Common myeloid progenitor, CD34-positive (primary cell): ENCODE measurements at regions of chr2 and their contacts with region 1.

Region 1: DNA sequence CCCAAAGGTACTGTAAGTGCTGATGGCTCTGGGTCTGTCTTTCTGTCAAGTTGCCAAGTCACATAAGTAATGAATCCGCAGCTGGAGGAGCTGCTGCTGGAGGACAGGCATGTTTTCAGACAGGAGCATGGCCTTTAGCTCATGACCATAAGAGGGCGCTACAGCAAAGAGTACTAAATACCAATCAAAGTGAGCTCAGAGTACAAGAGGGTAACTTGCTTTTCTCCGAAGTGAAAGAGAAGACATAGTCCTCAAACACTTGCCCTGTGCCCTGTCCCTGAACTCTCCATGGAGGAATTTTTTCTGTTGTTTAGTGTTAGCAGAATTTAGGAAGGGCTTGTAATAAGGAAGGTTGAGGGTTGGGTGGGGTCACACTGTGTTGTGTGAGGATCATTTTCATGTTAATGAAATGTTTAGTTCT is 58.0 kb upstream of the EML6 start:
- DNase-seq: peak; percentile 71 to 84 (median 73)
- H3K4me3 ChIP-seq: no peak overlapping the region
- H3K27ac ChIP-seq: no peak overlapping the region
- H3K4me1 ChIP-seq: peaks cover 0 to 15% (median 9%) of the 10 kb centered on the region in 4 experiments
- H3K27me3 ChIP-seq: no peaks in the 10 kb centered on the region

Region 2: GRCh38 chr2:54634564-54635511 is 30.6 kb before region 1 on chr2:
- CTCF ChIA-PET with region 1: interaction called, 15 read pairs
- POLR2A ChIA-PET with region 1: no interaction called
- DNase-seq: no peak
- H3K4me3 ChIP-seq: no peak overlapping the region
- H3K27ac ChIP-seq: no peak overlapping the region
- H3K4me1 ChIP-seq: no peaks in the 10 kb centered on the region
- H3K27me3 ChIP-seq: no peaks in the 10 kb centered on the region

Region 3: GRCh38 chr2:54641988-54642387 is 23.5 kb before region 1 on chr2:
- CTCF ChIA-PET with region 1: interaction called, 15 read pairs
- POLR2A ChIA-PET with region 1: no interaction called
- DNase-seq: no peak
- H3K4me3 ChIP-seq: no peak overlapping the region
- H3K27ac ChIP-seq: no peak overlapping the region
- H3K4me1 ChIP-seq: no peaks in the 10 kb centered on the region
- H3K27me3 ChIP-seq: no peaks in the 10 kb centered on the region

Region 4: DNA sequence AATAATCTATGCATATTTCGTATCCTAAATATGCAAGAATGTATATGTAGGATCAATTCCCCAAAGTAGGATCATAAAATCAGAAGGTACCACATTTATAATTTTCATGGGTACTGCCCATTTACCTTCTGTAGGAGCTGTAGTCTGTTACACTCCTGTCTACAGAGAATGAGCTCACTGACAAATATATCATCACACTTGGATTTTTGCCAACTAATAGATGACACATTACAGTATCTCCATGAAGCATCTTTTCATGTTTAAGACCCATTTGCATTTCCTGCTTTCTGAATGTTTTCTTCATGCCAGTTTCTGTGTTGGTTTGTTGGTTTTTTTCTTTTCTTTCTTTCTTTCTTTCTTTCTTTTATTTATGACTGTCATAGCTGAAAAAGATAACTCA is 12.9 kb before region 1 on chr2:
- CTCF ChIA-PET with region 1: interaction called, 16 read pairs
- POLR2A ChIA-PET with region 1: interaction called, 3 read pairs
- DNase-seq: peak in 1 of 3 donors; percentile 25
- H3K4me3 ChIP-seq: no peak overlapping the region
- H3K27ac ChIP-seq: no peak overlapping the region
- H3K4me1 ChIP-seq: no peaks in the 10 kb centered on the region
- H3K27me3 ChIP-seq: no peaks in the 10 kb centered on the region

Region 5: DNA sequence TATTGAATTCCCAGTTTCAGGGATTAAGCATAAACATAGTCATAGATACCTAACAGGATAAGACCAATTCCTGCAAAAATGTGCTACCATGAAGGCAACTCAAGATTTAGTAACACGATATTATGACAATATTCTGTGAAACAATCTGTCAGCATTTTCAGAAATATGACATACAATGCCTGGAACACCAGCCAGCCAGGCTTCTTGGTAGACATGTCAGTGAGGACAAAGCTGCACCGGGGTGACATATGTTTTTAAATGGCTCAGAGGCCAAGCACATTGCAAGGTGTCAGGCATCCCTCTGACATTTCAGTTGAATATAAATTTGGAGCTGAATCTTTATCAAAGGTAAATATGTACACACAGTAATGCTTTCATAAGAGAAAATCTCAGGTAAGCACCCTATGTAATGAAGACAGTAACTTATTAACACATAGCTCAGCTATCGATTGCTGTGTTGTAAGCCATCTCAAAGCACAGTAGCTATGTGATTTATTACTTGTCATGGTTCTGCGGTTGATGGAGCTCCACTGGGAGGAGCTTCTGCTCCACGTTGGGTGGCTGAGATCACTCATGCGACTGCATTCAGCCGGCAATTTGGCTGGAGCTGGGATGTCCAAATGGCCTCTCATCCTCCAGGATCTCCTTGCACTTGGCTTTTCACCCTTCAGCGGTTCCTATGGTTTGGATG is 26.1 kb after region 1 on chr2:
- CTCF ChIA-PET with region 1: interaction called, 17 read pairs
- POLR2A ChIA-PET with region 1: no interaction called
- DNase-seq: peak in 2 of 3 donors; percentile 43 to 63
- H3K4me3 ChIP-seq: no peak overlapping the region
- H3K27ac ChIP-seq: no peak overlapping the region
- H3K4me1 ChIP-seq: peaks cover 0 to 14% (median 5%) of the 10 kb centered on the region in 4 experiments
- H3K27me3 ChIP-seq: no peaks in the 10 kb centered on the region